Activated T-helper 1 cell treated with anti-CD3 and anti-CD28 coated beads, Interleukin-12 subunit alpha, Interleukin-12 subunit beta, Interleukin-2, Interleukin-4 antibody, amounts not matched to agents 30 ng/mL and 10 ng/mL and 1 ng/mL, durations not matched to agents 14 hours and 24 hours and 36 hours (primary cell): ENCODE measurements at regions of chr10 and their contacts with region 1.

Region 1: DNA sequence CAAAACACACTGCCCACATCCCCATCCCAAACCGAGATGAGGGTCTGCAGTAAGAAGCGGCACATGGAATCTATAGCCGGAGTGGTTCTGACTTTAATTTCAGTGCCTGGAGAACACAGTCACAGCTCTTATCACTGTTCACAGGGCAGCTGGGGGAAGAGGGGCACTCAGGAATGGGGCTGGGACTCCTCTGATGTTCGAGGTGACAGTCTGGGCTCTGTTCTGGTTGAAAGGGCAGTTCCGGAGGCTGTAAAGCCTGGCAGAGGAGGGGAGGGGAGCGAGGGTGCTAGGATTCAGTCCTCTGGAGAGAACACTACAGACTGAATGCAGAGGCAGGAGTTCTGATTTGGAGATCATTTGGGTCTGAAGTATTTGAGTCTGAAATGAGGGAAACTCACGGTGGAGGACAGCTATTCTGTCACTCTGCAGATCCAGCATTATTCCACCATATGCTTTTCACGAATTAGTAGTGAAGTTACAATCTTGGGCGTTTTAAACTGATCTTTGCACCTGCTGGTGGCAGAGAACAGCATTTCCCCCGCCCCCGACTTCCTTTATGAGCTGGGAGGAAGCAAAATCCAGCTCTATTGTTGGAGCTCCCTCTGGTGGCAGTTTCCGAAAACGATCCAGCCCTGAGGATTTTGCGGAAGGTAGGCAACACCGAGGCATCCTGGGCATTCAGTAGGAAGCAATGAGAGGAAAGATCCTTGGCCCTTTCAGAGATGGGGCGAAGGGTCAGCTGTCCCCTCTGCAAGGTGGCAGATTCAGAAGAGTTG is 22.7 kb upstream of the KCNK18 start:
- DNase-seq: peak; percentile 63
- H3K4me3 Mint-ChIP-seq: peak overlapping the region; percentile 83
- H3K27ac Mint-ChIP-seq: peak overlapping the region; percentile 55
- H3K4me1 Mint-ChIP-seq: peaks cover 20% of the 10 kb centered on the region
- H3K27me3 Mint-ChIP-seq: peaks cover 35% of the 10 kb centered on the region

Region 2: DNA sequence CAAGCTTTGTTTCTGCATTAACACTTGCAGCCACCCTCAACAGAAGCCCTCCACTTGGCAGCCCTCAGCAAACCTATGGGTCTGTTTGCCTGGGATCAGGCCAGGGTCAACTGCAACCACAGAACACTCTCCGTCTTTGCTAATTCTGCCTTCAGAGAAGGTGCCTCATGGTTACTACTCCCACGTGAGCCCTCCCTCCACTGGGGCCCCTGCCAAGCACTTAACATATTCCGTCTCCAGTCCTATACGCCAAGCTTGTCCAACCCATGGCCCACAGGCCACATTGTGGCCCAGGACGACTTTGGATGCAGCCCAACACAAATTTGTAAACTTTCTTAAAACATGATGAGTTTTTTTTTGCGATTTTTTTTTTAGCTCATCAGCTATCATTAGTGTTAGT is 487.0 kb before region 1 on chr10:
- intact Hi-C with region 1: loop called (anchors 1 kb)
- DNase-seq: no peak
- H3K4me3 Mint-ChIP-seq: no peak overlapping the region
- H3K27ac Mint-ChIP-seq: no peak overlapping the region
- H3K4me1 Mint-ChIP-seq: no peaks in the 10 kb centered on the region
- H3K27me3 Mint-ChIP-seq: no peaks in the 10 kb centered on the region

Region 3: GRCh38 chr10:116787893-116788665 is 386.5 kb before region 1 on chr10:
- intact Hi-C with region 1: loop called (anchors 2 kb)
- DNase-seq: peak; percentile 61
- H3K4me3 Mint-ChIP-seq: peak overlapping the region; percentile 47
- H3K27ac Mint-ChIP-seq: peak overlapping the region; percentile 52
- H3K4me1 Mint-ChIP-seq: peaks cover 17% of the 10 kb centered on the region
- H3K27me3 Mint-ChIP-seq: peaks cover 11% of the 10 kb centered on the region

Region 4: DNA sequence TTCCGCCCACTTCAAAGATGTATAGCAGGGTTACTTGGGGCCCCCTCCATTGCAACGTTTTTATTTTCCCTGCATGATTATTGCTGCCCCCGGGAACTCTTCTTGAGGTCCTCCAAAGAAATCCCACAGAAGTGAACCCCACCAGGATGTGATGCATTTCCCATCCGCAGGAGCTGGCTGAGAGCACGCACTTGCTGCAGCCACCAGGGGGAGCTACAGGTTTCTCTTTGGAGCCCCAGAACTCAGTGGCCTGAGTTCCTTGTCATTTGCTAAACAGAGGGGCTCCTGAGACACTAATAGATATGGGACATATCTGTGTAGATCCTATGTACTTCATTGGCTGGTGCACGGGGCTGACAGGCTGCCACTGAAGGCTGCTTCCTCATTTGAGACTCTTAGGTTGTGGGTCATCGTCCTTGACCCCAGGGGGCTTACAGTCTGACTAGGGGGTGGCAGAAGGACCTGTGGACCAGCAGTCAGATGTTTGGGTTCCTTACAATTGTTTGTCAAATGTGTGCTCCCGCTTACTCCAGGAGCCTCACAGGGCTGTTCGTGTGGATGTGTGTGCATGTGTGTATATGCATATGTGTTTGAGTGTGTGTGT is 377.6 kb before region 1 on chr10:
- intact Hi-C with region 1: loop called (anchors 1 kb)
- DNase-seq: peak; percentile 25
- H3K4me3 Mint-ChIP-seq: no peak overlapping the region
- H3K27ac Mint-ChIP-seq: no peak overlapping the region
- H3K4me1 Mint-ChIP-seq: no peaks in the 10 kb centered on the region
- H3K27me3 Mint-ChIP-seq: peaks cover 13% of the 10 kb centered on the region